CD8-positive, alpha-beta T cell (primary cell): ENCODE measurements at regions of chr16 and their contacts with region 1.

Region 1: DNA sequence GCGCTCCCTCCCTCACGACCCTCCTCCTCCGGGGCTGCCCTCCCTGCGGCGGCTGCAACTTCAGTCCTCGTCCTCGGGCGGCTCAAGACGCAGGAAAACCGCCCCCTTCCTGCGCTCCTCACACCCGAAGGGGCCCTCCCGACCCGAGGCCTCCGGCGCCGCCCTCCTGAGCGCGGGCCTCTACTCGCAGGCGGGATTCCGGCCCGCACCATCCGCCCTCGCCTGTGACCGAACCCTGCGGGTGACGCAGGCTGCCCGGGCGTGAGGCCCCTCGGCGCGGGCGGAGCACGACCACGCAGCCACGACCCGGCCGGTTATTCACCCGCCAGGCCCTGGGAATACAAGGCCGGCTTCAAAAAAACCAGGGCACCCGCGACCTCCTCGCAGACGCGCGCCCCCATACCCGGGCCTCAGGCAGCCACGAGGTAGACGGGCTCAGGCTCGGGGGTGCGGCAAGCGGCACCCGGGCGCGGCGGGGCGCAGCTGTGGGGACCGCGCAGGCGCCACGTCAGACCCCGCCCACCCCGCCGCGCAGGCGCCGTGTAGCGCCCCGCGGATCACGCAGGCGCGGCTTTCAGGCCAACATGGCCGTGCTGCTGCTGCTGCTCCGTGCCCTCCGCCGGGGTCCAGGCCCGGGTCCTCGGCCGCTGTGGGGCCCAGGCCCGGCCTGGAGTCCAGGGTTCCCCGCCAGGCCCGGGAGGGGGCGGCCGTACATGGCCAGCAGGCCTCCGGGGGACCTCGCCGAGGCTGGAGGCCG is at the start of gene SPG7:
- DNase-seq: peak; percentile 85 to 96 (median 88)
- ATAC-seq: peak; percentile 73
- H3K4me3 ChIP-seq: peak within 1 kb of the TSS; percentile 61 to 91
- H3K4me3 Mint-ChIP-seq: peak within 1 kb of the TSS; percentile 96
- H3K27ac ChIP-seq: peak within 1 kb of the TSS; percentile 77 to 86
- H3K27ac Mint-ChIP-seq: peak within 1 kb of the TSS; percentile 96
- H3K4me1 ChIP-seq: peaks cover 37% of the 10 kb centered on the region
- H3K4me1 Mint-ChIP-seq: peaks cover 32% of the 10 kb centered on the region
- H3K27me3 ChIP-seq: no peaks in the 10 kb centered on the region
- H3K27me3 Mint-ChIP-seq: no peaks in the 10 kb centered on the region
- CTCF ChIP-seq: no peak
- total RNA-seq, gene SPG7: 159 to 180 TPM

Region 2: DNA sequence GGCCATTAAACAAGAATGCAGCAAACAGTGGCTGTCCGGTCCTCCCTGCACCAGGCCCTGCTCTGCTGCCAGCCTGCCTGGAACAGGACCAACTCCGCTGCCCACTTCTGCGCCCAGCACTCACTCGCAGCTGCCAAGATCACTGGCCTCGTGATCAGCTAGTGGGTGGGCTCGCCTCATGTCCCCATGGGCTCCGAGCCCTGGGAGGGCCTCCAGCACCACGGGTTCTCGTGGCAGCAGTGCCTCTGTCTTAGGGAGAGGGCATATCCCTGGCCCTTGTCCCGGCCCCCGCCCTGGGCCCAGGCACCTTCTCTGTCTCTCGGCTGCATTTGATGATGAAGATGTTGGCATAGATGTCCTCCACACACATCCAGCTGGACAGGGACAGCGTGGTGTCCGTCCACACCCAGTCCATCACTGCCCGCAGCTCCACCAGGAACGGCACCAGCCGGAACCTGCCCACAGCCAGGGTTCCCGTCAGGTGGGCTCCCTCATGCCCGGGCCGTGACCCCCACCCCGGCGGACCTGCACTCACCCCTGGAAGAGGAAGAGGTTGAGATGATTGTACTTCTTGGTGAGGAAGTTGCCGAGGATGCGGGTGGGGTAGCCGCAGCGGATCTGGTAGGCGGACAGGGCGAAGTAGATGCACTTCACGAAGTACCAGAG is 788.6 kb before region 1 on chr16:
- CTCF ChIA-PET with region 1: no interaction called
- POLR2A ChIA-PET with region 1: no interaction called
- intact Hi-C with region 1: no loop called
- DNase-seq: no peak
- ATAC-seq: no peak
- H3K4me3 ChIP-seq: no peak overlapping the region
- H3K4me3 Mint-ChIP-seq: no peak overlapping the region
- H3K27ac ChIP-seq: no peak overlapping the region
- H3K27ac Mint-ChIP-seq: no peak overlapping the region
- H3K4me1 ChIP-seq: no peaks in the 10 kb centered on the region
- H3K4me1 Mint-ChIP-seq: no peaks in the 10 kb centered on the region
- H3K27me3 ChIP-seq: no peaks in the 10 kb centered on the region
- H3K27me3 Mint-ChIP-seq: no peaks in the 10 kb centered on the region
- CTCF ChIP-seq: no peak

Region 3: DNA sequence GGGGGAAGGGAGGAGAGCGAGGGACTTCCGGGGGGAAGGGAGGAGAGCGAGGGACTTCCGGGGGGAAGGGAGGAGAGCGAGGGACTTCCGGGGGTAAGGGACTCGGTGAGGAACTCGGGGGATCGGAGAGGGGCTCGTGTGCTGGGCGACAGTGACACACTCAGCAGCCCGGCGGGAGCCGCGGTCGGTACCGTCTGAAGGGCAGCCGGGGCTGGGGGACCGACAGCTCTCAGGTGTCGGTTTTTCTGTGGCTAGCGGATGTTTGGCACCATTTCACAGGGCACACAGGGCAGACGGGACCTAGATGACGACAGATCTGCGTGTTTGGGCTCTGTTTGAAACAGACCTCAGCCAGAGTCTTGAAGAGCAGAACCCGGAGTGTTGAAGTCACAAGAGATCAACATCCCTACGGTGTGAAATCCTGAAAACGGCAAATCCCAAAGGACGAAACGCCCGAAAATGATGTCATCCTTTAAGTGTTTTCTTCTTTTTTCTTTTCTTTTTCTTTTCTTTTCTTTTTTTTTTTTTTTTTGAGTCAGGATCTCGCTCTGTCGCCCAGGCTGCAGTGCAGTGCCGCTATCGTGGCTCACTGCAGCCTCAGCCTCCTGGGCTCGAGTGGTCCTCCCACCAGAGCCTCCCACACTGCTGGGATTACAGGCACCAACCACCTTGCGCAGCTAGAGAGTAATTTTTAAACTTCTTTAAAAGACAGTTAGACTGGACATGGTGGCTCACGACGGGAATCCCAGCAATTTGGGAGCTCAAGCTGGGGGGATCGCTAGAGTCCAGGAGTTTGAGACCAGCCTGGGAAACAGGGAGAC is 266.6 kb before region 1 on chr16:
- CTCF ChIA-PET with region 1: interaction called, 4 read pairs
- POLR2A ChIA-PET with region 1: interaction called, 6 read pairs
- intact Hi-C with region 1: loop called (anchors 1 kb)
- DNase-seq: peak; percentile 62 to 97 (median 87)
- ATAC-seq: peak; percentile 88
- H3K4me3 ChIP-seq: peak overlapping the region; percentile 76 to 85
- H3K4me3 Mint-ChIP-seq: peak overlapping the region; percentile 92
- H3K27ac ChIP-seq: peak overlapping the region; percentile 89 to 100
- H3K27ac Mint-ChIP-seq: peak overlapping the region; percentile 99
- H3K4me1 ChIP-seq: peaks cover 8% of the 10 kb centered on the region
- H3K4me1 Mint-ChIP-seq: peaks cover 25% of the 10 kb centered on the region
- H3K27me3 ChIP-seq: no peaks in the 10 kb centered on the region
- H3K27me3 Mint-ChIP-seq: no peaks in the 10 kb centered on the region
- CTCF ChIP-seq: no peak

Region 4: DNA sequence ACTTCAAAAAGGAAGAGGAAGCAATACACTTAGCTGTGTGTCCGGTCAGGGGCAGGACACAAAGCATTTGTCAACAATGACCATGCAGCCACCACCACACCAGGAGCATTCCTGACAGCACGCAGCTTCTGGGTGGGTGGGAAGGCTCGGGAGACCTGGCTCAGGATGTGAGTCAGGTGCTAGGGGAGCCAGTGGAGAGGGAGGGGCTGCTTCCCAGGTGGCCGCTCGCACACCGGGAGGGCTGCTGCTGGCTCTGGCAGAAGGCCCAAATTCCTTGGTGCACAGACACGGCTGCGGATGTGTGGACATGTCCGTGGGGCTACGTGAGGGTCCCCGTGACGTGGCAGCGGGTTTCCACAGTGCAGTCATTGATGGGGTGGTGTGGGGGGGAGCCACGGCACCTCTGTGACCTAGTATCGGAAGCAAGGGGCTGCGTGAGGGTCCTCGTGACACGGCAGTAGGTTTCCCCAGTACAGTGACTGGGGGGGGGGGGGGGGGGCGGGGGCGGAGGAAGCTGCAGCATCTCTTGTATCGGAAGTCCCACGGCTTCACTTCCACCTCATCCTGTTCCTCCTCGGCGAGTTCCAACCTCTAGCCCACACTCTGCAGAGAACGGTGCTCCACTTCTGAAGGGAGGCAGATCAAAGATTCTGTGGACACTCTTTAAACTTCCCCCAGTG is 177.7 kb before region 1 on chr16:
- CTCF ChIA-PET with region 1: interaction called, 5 read pairs
- POLR2A ChIA-PET with region 1: no interaction called
- intact Hi-C with region 1: loop called (anchors 1 kb)
- DNase-seq: peak in 6 of 9 experiments; percentile 23 to 85 (median 51)
- ATAC-seq: peak; percentile 55
- H3K4me3 ChIP-seq: peak overlapping the region; percentile 16 to 43
- H3K4me3 Mint-ChIP-seq: peak overlapping the region; percentile 60
- H3K27ac ChIP-seq: peak overlapping the region; percentile 45 to 81
- H3K27ac Mint-ChIP-seq: peak overlapping the region; percentile 73
- H3K4me1 ChIP-seq: peaks cover 77% of the 10 kb centered on the region
- H3K4me1 Mint-ChIP-seq: peaks cover 83% of the 10 kb centered on the region
- H3K27me3 ChIP-seq: no peaks in the 10 kb centered on the region
- H3K27me3 Mint-ChIP-seq: no peaks in the 10 kb centered on the region
- CTCF ChIP-seq: no peak

Region 5: DNA sequence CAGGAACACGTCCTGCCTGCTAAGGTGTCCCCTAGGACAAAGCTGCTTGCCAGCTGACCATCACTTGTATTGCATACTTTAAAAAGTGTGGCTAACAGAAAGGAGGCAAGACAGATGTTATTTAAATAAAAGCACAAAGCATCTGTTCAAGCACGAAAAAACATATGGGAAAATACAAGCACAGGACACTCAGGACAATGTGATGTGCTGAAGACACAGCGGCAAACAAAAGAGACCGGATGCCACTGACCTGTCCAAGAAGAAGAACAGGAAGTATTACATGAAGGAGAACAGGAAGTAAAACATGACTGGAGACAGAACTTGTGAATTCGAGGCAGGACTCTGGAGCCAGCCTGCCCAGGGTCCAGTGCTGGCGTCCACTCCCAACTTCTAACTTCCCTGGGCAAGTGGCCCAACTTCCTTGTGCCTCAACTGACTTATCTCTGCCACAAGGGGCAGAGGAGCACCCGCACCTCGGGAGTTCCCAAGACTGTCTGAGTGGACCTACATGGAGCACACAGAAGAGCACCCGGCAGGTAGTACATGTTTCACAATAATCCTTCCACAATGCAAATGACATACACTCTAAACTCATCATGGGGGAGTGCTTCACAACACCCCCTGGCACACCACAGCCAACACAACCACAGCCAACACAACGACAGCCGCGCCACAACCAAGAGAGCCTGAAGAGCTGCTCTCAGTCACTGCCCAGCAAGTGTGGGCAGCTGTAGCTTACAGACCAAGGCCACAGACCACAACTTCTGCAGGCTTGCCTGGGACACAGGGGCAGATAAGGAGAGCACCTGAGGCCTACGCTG is 54.3 kb before region 1 on chr16:
- CTCF ChIA-PET with region 1: no interaction called
- POLR2A ChIA-PET with region 1: no interaction called
- intact Hi-C with region 1: no loop called
- DNase-seq: peak in 2 of 9 experiments; percentile 41 to 54
- ATAC-seq: peak; percentile 21
- H3K4me3 ChIP-seq: no peak overlapping the region
- H3K4me3 Mint-ChIP-seq: peak overlapping the region; percentile 48
- H3K27ac ChIP-seq: no peak overlapping the region
- H3K27ac Mint-ChIP-seq: peak overlapping the region; percentile 23
- H3K4me1 ChIP-seq: peaks cover 87% of the 10 kb centered on the region
- H3K4me1 Mint-ChIP-seq: peaks cover 80% of the 10 kb centered on the region
- H3K27me3 ChIP-seq: no peaks in the 10 kb centered on the region
- H3K27me3 Mint-ChIP-seq: no peaks in the 10 kb centered on the region
- CTCF ChIP-seq: no peak

Region 6: DNA sequence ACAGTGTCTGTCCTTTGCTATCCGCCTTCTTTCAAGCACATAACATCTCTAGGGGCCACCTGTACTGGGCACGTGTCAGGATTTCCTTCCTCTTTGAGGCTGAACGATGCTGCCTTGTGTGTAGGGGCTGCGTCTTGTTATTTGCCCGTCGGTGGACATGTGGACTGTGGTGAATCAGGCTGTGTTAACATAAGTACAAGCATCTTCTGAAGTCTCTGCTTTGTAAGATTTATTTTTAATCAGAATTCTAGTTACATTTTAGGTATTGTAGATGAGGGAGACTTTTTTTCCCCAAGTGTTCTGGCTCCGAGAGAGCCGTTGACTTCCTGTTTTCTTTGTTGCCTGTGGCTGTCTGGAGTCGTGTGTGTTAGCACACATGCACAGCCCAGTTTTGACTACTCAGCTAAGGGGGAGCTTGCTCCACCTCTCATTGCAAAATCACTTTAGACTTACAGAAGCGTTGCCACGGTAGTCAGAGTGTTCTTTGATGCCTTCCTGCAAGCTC is 26.3 kb after region 1 on chr16:
- CTCF ChIA-PET with region 1: no interaction called
- POLR2A ChIA-PET with region 1: interaction called, 8 read pairs
- intact Hi-C with region 1: loop called in 1 of 2 experiments (anchors 1 kb)
- DNase-seq: peak; percentile 6 to 78 (median 59)
- ATAC-seq: peak; percentile 93
- H3K4me3 ChIP-seq: peak overlapping the region in 1 of 2 experiments; percentile 7
- H3K4me3 Mint-ChIP-seq: peak overlapping the region; percentile 55
- H3K27ac ChIP-seq: peak overlapping the region; percentile 9 to 49
- H3K27ac Mint-ChIP-seq: peak overlapping the region; percentile 94
- H3K4me1 ChIP-seq: peaks cover 24% of the 10 kb centered on the region
- H3K4me1 Mint-ChIP-seq: peaks cover 25% of the 10 kb centered on the region
- H3K27me3 ChIP-seq: no peaks in the 10 kb centered on the region
- H3K27me3 Mint-ChIP-seq: no peaks in the 10 kb centered on the region
- CTCF ChIP-seq: no peak

Region 7: GRCh38 chr16:89560378-89561141 is 52.5 kb after region 1 on chr16 and contains the start of gene RPL13:
- CTCF ChIA-PET with region 1: interaction called, 3 read pairs
- POLR2A ChIA-PET with region 1: interaction called, 3 read pairs
- intact Hi-C with region 1: loop called (anchors 1 kb)
- DNase-seq: peak; percentile 81 to 97 (median 93)
- ATAC-seq: peak; percentile 89
- H3K4me3 ChIP-seq: peak within 1 kb of the TSS; percentile 73 to 90
- H3K4me3 Mint-ChIP-seq: peak within 1 kb of the TSS; percentile 89
- H3K27ac ChIP-seq: peak within 1 kb of the TSS; percentile 90 to 97
- H3K27ac Mint-ChIP-seq: peak within 1 kb of the TSS; percentile 93
- H3K4me1 ChIP-seq: peaks cover 54% of the 10 kb centered on the region
- H3K4me1 Mint-ChIP-seq: peaks cover 51% of the 10 kb centered on the region
- H3K27me3 ChIP-seq: no peaks in the 10 kb centered on the region
- H3K27me3 Mint-ChIP-seq: no peaks in the 10 kb centered on the region
- CTCF ChIP-seq: no peak
- total RNA-seq, gene RPL13: 4,632 to 4,668 TPM

Region 8: GRCh38 chr16:89651584-89651983 is 143.6 kb after region 1 on chr16:
- CTCF ChIA-PET with region 1: no interaction called
- POLR2A ChIA-PET with region 1: no interaction called
- intact Hi-C with region 1: no loop called
- DNase-seq: no peak
- ATAC-seq: no peak
- H3K4me3 ChIP-seq: no peak overlapping the region
- H3K4me3 Mint-ChIP-seq: no peak overlapping the region
- H3K27ac ChIP-seq: no peak overlapping the region
- H3K27ac Mint-ChIP-seq: no peak overlapping the region
- H3K4me1 ChIP-seq: peaks cover 4% of the 10 kb centered on the region
- H3K4me1 Mint-ChIP-seq: peaks cover 19% of the 10 kb centered on the region
- H3K27me3 ChIP-seq: no peaks in the 10 kb centered on the region
- H3K27me3 Mint-ChIP-seq: no peaks in the 10 kb centered on the region
- CTCF ChIP-seq: no peak